ENCODE measurements at regions of chr9 and their contacts with region 1.

Region 1: DNA sequence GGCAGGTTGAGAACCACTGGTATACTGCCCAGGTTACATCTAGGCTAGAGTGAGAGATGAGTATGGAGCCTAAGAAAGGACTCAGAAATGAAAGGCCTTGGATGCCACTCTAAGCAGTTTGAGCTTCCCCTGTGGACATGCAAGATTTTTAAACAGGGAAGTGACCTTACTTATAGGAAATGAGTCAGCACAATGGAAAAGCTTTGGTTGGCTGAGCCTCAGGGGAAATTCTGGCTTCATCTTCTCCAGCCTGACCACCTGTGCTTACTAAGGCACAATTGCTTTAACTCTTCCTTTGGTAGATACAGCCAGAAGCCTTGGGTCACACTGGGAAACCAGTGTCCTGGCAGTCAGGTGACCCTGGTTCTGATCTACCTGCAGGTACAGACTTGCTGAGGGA is 380.2 kb upstream of the ZNF462 start:
- DNase-seq: no peak
- ATAC-seq: no peak
- H3K4me3 ChIP-seq: no peak overlapping the region
- H3K4me3 Mint-ChIP-seq: no peak overlapping the region
- H3K27ac ChIP-seq: no peak overlapping the region
- H3K27ac Mint-ChIP-seq: no peak overlapping the region
- H3K4me1 ChIP-seq: no peaks in the 10 kb centered on the region
- H3K4me1 Mint-ChIP-seq: peaks cover 18 to 34% of the 10 kb centered on the region in 2 donors
- H3K27me3 ChIP-seq: no peaks in the 10 kb centered on the region
- H3K27me3 Mint-ChIP-seq: no peaks in the 10 kb centered on the region
- CTCF ChIP-seq: no peak

Region 2: GRCh38 chr9:106438928-106439327 is 43.8 kb before region 1 on chr9:
- intact Hi-C with region 1: loop called (anchors 10 kb)
- DNase-seq: no peak
- ATAC-seq: no peak
- H3K4me3 ChIP-seq: no peak overlapping the region
- H3K4me3 Mint-ChIP-seq: no peak overlapping the region
- H3K27ac ChIP-seq: no peak overlapping the region
- H3K27ac Mint-ChIP-seq: no peak overlapping the region
- H3K4me1 ChIP-seq: no peaks in the 10 kb centered on the region
- H3K4me1 Mint-ChIP-seq: peaks cover 14 to 17% of the 10 kb centered on the region in 2 donors
- H3K27me3 ChIP-seq: no peaks in the 10 kb centered on the region
- H3K27me3 Mint-ChIP-seq: no peaks in the 10 kb centered on the region
- CTCF ChIP-seq: no peak

Region 3: DNA sequence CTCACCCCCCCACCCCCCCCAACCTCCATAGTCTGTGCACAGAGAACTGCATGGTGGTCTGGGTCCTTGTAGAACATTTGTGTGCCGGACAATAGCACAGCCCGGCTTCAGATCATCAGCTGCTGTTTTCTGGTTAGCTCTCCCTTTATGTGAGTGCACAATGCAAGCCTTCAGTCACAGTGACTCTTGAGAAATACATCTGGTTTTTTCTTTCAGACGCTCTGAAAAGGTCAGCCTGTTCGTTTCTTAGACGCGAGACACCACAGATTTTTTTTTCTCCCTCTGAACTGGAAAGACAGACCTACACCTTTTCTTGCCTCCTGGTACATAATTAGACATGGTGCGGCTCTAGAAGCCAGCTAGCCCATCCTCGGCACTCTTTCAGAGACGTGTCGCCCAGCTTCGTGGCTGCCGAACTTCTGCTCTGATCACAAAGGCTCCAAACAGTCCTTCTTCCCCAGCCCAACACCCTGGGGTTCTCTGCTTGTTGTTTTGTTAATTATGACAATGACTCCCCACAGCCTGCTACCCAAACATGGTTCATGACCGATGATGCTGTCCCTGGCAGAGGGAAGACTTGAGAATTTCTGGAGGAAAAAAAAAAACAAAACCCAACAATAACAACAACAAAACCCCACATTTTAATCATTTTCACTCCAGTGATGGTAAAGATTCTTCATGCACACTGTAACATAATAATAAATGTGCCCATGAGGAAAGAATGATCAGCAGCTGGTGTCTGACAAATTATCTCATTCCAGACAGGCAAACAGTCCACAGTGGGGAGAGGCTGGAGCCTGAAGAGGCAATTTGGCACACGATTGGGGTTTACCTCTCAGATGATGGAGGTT is 138.8 kb after region 1 on chr9:
- intact Hi-C with region 1: no loop called
- DNase-seq: no peak
- ATAC-seq: no peak
- H3K4me3 ChIP-seq: no peak overlapping the region
- H3K4me3 Mint-ChIP-seq: no peak overlapping the region
- H3K27ac ChIP-seq: no peak overlapping the region
- H3K27ac Mint-ChIP-seq: no peak overlapping the region
- H3K4me1 ChIP-seq: no peaks in the 10 kb centered on the region
- H3K4me1 Mint-ChIP-seq: no peaks in the 10 kb centered on the region
- H3K27me3 ChIP-seq: no peaks in the 10 kb centered on the region
- H3K27me3 Mint-ChIP-seq: no peaks in the 10 kb centered on the region
- CTCF ChIP-seq: no peak